ENCODE measurements at regions of chr1 and their contacts with region 1.

Region 1: GRCh38 chr1:181044449-181044966 is 10.7 kb downstream of the MR1 start:
- DNase-seq: peak; percentile 82
- ATAC-seq: peak; percentile 96
- H3K4me3 ChIP-seq: peak overlapping the region in 1 of 3 experiments; percentile 40; a peak in 2 of 6 replicates
- H3K27ac ChIP-seq: peak overlapping the region; percentile 57
- H3K4me1 ChIP-seq: peaks cover 51% of the 10 kb centered on the region
- H3K27me3 ChIP-seq: no peaks in the 10 kb centered on the region
- CTCF ChIP-seq: no peak
- EP300 ChIP-seq: peak in 1 of 2 experiments; percentile 67; a peak in 3 of 4 replicates
- POLR2A ChIP-seq: 0 out of 4 replicates have a peak, but pooled peaks of 1 of the 2 experiments have one; percentile 22
- RAD21 ChIP-seq: no peak

Region 2: DNA sequence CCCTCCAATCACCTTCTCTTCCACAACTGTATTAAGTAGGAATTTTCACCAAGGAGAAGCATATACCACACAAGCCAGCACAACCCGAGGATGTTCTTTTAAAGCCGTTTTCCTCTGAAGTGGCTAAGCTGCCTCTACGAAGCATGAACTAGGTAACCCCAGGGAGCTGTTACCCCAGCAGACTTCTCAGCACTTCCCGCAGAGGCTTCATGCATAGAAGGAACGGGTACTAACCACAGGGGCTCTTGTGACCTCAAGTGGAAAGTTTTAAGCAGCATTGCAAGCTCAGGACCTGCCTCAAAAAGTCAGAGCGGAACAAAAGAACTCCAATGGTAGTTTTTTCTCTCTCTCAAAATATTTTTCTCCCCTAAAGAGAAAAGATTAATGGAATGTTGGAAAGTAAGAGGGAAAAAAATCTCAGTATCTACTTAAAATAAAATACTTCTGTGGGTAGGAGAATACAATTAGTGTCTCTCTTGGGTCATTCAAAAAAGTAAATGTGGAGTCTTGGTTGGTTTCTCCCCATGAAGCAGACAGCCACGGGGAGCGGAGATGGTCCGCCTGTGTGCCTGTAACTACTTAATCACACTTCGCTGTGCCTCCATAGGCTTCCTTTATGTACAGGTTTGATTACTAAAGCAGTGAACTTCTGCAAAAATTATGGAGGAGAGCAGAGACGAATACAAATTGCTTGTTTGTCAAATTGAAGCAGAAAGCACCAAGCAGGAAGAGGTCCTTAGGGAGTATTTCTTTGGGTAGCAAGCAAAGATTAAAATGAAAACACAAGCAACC is 62.7 kb before region 1 on chr1:
- CTCF ChIA-PET with region 1: no interaction called
- POLR2A ChIA-PET with region 1: no interaction called
- in situ Hi-C with region 1: no loop called
- intact Hi-C with region 1: no loop called
- DNase-seq: no peak
- ATAC-seq: no peak
- H3K4me3 ChIP-seq: no peak overlapping the region
- H3K27ac ChIP-seq: no peak overlapping the region
- H3K4me1 ChIP-seq: no peaks in the 10 kb centered on the region
- H3K27me3 ChIP-seq: no peaks in the 10 kb centered on the region
- CTCF ChIP-seq: no peak
- EP300 ChIP-seq: no peak
- POLR2A ChIP-seq: no peak
- RAD21 ChIP-seq: no peak

Region 3: DNA sequence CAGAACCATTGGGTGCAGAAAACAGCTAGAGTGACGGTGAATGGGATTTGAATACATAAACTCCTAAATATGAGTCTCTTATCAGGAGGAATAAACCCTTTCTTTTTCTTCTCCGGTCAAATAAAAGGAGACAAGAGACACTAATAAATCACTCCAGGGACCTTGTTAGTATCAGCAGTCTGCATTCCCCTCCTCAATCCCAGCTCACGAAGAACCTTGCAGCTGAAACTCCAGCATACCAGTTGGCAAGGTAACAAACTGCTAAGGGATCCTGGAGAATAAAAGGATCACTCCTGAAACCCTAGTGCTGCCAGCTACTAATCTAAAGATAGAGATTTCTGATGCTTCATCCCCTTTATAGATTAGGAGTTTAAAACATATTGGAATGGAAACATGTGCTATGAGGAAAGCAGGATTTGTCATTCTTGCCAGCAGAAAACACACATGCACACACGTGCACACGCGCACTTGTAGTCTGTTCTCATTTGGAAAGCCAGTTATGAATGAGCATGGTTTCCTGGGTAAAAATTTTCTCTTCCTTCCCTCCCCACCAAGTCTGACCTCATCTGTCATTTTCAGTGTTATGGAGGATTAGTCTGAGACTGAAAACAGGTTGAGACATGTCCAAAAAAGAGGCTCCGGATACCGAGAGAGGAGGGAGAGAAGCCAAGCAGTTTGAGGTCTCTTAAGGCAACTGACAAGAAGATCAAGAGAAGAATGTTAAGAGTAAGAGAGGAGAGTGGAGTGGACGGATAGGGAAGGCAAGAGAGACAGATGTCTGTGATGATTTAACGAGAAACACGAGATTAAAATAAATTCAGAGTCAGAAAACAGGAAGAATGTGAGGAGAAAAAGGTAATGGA is 54.9 kb after region 1 on chr1:
- CTCF ChIA-PET with region 1: no interaction called
- POLR2A ChIA-PET with region 1: interaction called, 12 read pairs
- in situ Hi-C with region 1: no loop called
- intact Hi-C with region 1: no loop called
- DNase-seq: no peak
- ATAC-seq: no peak
- H3K4me3 ChIP-seq: no peak overlapping the region
- H3K27ac ChIP-seq: no peak overlapping the region
- H3K4me1 ChIP-seq: peaks cover 77% of the 10 kb centered on the region
- H3K27me3 ChIP-seq: peaks cover 0 to 4% of the 10 kb centered on the region in 2 experiments; a peak in 2 of 5 replicates
- CTCF ChIP-seq: no peak
- EP300 ChIP-seq: no peak
- POLR2A ChIP-seq: no peak
- RAD21 ChIP-seq: no peak

Region 4: DNA sequence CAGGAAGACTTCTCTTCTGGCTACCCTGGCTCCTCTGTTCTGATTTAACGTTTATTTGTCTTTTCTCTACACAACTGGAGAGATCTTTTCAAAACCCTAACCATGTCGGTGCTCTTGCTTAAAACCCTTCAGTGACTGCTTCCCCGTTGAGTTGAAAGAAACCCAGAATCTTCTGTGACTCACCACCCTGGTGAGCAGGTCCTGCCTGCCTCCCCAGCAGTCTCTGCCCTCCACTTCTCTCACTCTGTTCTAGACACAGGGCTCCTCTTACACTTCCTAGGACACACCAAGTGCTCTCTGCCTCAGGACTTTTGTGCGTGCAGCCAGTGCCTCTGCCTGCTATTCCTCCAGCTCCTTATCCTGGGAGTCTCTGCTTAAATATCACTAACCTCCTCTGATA is 175.4 kb after region 1 on chr1:
- CTCF ChIA-PET with region 1: no interaction called
- POLR2A ChIA-PET with region 1: no interaction called
- in situ Hi-C with region 1: no loop called
- intact Hi-C with region 1: no loop called
- DNase-seq: no peak
- ATAC-seq: no peak
- H3K4me3 ChIP-seq: no peak overlapping the region
- H3K27ac ChIP-seq: no peak overlapping the region
- H3K4me1 ChIP-seq: no peaks in the 10 kb centered on the region
- H3K27me3 ChIP-seq: peaks cover 3 to 16% of the 10 kb centered on the region in 2 experiments; a peak in 1 of 5 replicates
- CTCF ChIP-seq: no peak
- EP300 ChIP-seq: no peak
- POLR2A ChIP-seq: no peak
- RAD21 ChIP-seq: no peak

Measured in HepG2 (cell line).